CD4-positive, alpha-beta memory T cell (primary cell): ENCODE measurements at regions of chr12 and their contacts with region 1.

Region 1: GRCh38 chr12:56224102-56224701 is at the start of gene NABP2:
- DNase-seq: peak; percentile 88 to 93 (median 89)
- H3K4me3 ChIP-seq: peak within 1 kb of the TSS; percentile 28 to 79
- H3K4me3 Mint-ChIP-seq: peak within 1 kb of the TSS; percentile 83 to 99 (median 87)
- H3K27ac ChIP-seq: peak within 1 kb of the TSS; percentile 83
- H3K27ac Mint-ChIP-seq: peak within 1 kb of the TSS; percentile 90 to 100 (median 99)
- H3K4me1 ChIP-seq: peaks cover 42% of the 10 kb centered on the region
- H3K4me1 Mint-ChIP-seq: peaks cover 24 to 58% (median 43%) of the 10 kb centered on the region in 4 donors
- H3K27me3 ChIP-seq: no peaks in the 10 kb centered on the region
- H3K27me3 Mint-ChIP-seq: no peaks in the 10 kb centered on the region
- total RNA-seq, gene NABP2: 16.9 to 19.1 TPM

Region 2: GRCh38 chr12:55092579-55092978 is 1131.6 kb before region 1 on chr12:
- CTCF ChIA-PET with region 1: no interaction called
- POLR2A ChIA-PET with region 1: no interaction called
- intact Hi-C with region 1: no loop called
- DNase-seq: no peak
- H3K4me3 ChIP-seq: no peak overlapping the region
- H3K4me3 Mint-ChIP-seq: no peak overlapping the region
- H3K27ac ChIP-seq: no peak overlapping the region
- H3K27ac Mint-ChIP-seq: no peak overlapping the region
- H3K4me1 ChIP-seq: no peaks in the 10 kb centered on the region
- H3K4me1 Mint-ChIP-seq: no peaks in the 10 kb centered on the region
- H3K27me3 ChIP-seq: no peaks in the 10 kb centered on the region
- H3K27me3 Mint-ChIP-seq: peaks cover 12 to 23% of the 10 kb centered on the region in 2 donors

Region 3: DNA sequence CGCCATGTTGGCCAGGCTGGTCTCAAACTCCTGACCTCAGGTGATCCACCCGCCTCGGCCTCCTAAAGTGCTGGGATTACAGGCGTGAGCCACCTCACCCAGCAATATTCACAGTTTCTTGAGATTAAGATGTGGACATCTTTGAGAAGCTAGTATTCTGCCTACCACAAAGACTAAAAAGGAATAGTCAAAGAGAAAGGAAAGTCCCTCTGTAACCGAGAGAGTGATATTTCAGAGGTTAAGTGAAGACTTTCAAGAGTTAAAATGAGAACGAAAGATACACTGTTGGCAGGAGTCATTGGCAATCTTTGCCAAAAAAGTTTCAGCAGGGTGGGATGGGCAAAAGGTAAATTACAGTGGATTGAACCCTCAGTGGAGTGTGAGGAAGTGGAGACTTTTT is 277.6 kb before region 1 on chr12:
- CTCF ChIA-PET with region 1: no interaction called
- POLR2A ChIA-PET with region 1: no interaction called
- intact Hi-C with region 1: no loop called
- DNase-seq: no peak
- H3K4me3 ChIP-seq: no peak overlapping the region
- H3K4me3 Mint-ChIP-seq: no peak overlapping the region
- H3K27ac ChIP-seq: no peak overlapping the region
- H3K27ac Mint-ChIP-seq: peak overlapping the region in 6 of 7 donors; percentile 43 to 74 (median 58)
- H3K4me1 ChIP-seq: peaks cover 9% of the 10 kb centered on the region
- H3K4me1 Mint-ChIP-seq: peaks cover 17 to 44% (median 26%) of the 10 kb centered on the region in 4 donors
- H3K27me3 ChIP-seq: no peaks in the 10 kb centered on the region
- H3K27me3 Mint-ChIP-seq: no peaks in the 10 kb centered on the region

Region 4: GRCh38 chr12:56104109-56104814 is 119.9 kb before region 1 on chr12 and contains the start of gene PA2G4:
- CTCF ChIA-PET with region 1: interaction called, 11 read pairs
- POLR2A ChIA-PET with region 1: interaction called, 23 read pairs
- intact Hi-C with region 1: no loop called
- DNase-seq: peak; percentile 95 to 97 (median 96)
- H3K4me3 ChIP-seq: peak within 1 kb of the TSS; percentile 62 to 90
- H3K4me3 Mint-ChIP-seq: peak within 1 kb of the TSS; percentile 89 to 99 (median 96)
- H3K27ac ChIP-seq: peak within 1 kb of the TSS; percentile 82
- H3K27ac Mint-ChIP-seq: peak within 1 kb of the TSS; percentile 97 to 100 (median 98)
- H3K4me1 ChIP-seq: peaks cover 49% of the 10 kb centered on the region
- H3K4me1 Mint-ChIP-seq: peaks cover 34 to 62% (median 47%) of the 10 kb centered on the region in 4 donors
- H3K27me3 ChIP-seq: no peaks in the 10 kb centered on the region
- H3K27me3 Mint-ChIP-seq: no peaks in the 10 kb centered on the region
- total RNA-seq, gene PA2G4: 106 to 108 TPM

Region 5: GRCh38 chr12:56158029-56158925 is 65.9 kb before region 1 on chr12 and contains the start of gene MYL6:
- CTCF ChIA-PET with region 1: interaction called, 3 read pairs
- POLR2A ChIA-PET with region 1: interaction called, 9 read pairs
- intact Hi-C with region 1: loop called (anchors 1 kb)
- DNase-seq: peak; percentile 88 to 98 (median 91)
- H3K4me3 ChIP-seq: peak within 1 kb of the TSS; percentile 86 to 89
- H3K4me3 Mint-ChIP-seq: peak within 1 kb of the TSS; percentile 93 to 100 (median 97)
- H3K27ac ChIP-seq: peak within 1 kb of the TSS; percentile 97
- H3K27ac Mint-ChIP-seq: peak within 1 kb of the TSS; percentile 96 to 100 (median 99)
- H3K4me1 ChIP-seq: peaks cover 40% of the 10 kb centered on the region
- H3K4me1 Mint-ChIP-seq: peaks cover 28 to 64% (median 37%) of the 10 kb centered on the region in 4 donors
- H3K27me3 ChIP-seq: no peaks in the 10 kb centered on the region
- H3K27me3 Mint-ChIP-seq: no peaks in the 10 kb centered on the region
- total RNA-seq, gene MYL6: 567 to 589 TPM

Region 6: GRCh38 chr12:56266693-56267442 is 42.7 kb after region 1 on chr12 and contains the start of gene COQ10A:
- CTCF ChIA-PET with region 1: interaction called, 13 read pairs
- POLR2A ChIA-PET with region 1: interaction called, 17 read pairs
- intact Hi-C with region 1: loop called (anchors 5 kb)
- DNase-seq: peak; percentile 89 to 96 (median 91)
- H3K4me3 ChIP-seq: peak within 1 kb of the TSS; percentile 27 to 90
- H3K4me3 Mint-ChIP-seq: peak within 1 kb of the TSS; percentile 89 to 99 (median 96)
- H3K27ac ChIP-seq: peak within 1 kb of the TSS; percentile 84
- H3K27ac Mint-ChIP-seq: peak within 1 kb of the TSS; percentile 90 to 99 (median 97)
- H3K4me1 ChIP-seq: peaks cover 14% of the 10 kb centered on the region
- H3K4me1 Mint-ChIP-seq: peaks cover 10 to 23% (median 16%) of the 10 kb centered on the region in 4 donors
- H3K27me3 ChIP-seq: no peaks in the 10 kb centered on the region
- H3K27me3 Mint-ChIP-seq: no peaks in the 10 kb centered on the region
- total RNA-seq, gene COQ10A: 35.3 to 38.6 TPM

Region 7: GRCh38 chr12:56448860-56449621 is 224.8 kb after region 1 on chr12 and contains the start of gene TIMELESS:
- CTCF ChIA-PET with region 1: no interaction called
- POLR2A ChIA-PET with region 1: interaction called, 18 read pairs
- intact Hi-C with region 1: no loop called
- DNase-seq: peak; percentile 85 to 90 (median 86)
- H3K4me3 ChIP-seq: peak within 1 kb of the TSS; percentile 96
- H3K4me3 Mint-ChIP-seq: peak within 1 kb of the TSS; percentile 90 to 95 (median 94)
- H3K27ac ChIP-seq: peak within 1 kb of the TSS; percentile 75
- H3K27ac Mint-ChIP-seq: peak within 1 kb of the TSS; percentile 75 to 98 (median 97)
- H3K4me1 ChIP-seq: peaks cover 7% of the 10 kb centered on the region
- H3K4me1 Mint-ChIP-seq: peaks cover 11 to 28% (median 16%) of the 10 kb centered on the region in 4 donors
- H3K27me3 ChIP-seq: no peaks in the 10 kb centered on the region
- H3K27me3 Mint-ChIP-seq: no peaks in the 10 kb centered on the region
- total RNA-seq, gene TIMELESS: 7.3 to 7.5 TPM

Region 8: DNA sequence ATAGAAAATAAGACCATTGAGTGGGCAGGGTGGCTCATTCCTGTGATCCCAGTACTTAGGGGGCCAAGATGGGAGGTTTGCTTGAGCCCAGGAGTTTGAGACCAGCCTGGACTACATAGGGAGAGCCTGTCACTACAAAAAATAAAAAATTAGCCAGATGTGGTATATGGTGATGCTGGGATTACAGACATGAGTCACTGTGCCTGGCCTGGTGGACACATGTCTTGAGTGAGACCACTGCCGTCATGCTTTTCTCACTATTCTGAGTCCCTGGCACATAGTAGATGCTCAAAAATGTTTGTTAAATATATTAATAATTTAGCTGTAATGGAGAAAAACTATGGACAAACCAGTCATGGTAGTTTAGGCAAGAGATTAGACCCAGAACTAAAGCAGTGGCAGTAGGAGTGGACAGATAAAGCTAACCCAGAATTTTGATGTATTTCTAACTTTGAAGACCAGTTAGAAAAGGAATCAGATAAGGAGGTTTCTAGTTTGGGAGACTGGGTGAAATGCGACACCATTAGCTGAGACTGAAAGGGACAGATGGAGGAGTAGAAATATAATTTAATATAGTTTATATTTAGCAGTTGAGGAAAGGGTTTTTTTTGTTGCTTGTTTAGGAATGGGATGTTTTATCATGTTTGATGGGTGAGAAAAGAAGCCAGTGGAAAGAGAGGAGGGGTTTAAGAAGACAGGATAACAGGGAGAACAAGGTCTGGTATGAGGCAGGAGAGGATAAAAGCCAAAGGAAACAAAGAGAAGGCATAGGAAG is 471.3 kb after region 1 on chr12:
- CTCF ChIA-PET with region 1: no interaction called
- POLR2A ChIA-PET with region 1: no interaction called
- intact Hi-C with region 1: no loop called
- DNase-seq: no peak
- H3K4me3 ChIP-seq: no peak overlapping the region
- H3K4me3 Mint-ChIP-seq: no peak overlapping the region
- H3K27ac ChIP-seq: no peak overlapping the region
- H3K27ac Mint-ChIP-seq: peak overlapping the region in 3 of 7 donors; percentile 13 to 38 (median 30)
- H3K4me1 ChIP-seq: no peaks in the 10 kb centered on the region
- H3K4me1 Mint-ChIP-seq: peaks cover 0 to 1% (median 0%) of the 10 kb centered on the region in 4 donors
- H3K27me3 ChIP-seq: no peaks in the 10 kb centered on the region
- H3K27me3 Mint-ChIP-seq: no peaks in the 10 kb centered on the region

Region 9: DNA sequence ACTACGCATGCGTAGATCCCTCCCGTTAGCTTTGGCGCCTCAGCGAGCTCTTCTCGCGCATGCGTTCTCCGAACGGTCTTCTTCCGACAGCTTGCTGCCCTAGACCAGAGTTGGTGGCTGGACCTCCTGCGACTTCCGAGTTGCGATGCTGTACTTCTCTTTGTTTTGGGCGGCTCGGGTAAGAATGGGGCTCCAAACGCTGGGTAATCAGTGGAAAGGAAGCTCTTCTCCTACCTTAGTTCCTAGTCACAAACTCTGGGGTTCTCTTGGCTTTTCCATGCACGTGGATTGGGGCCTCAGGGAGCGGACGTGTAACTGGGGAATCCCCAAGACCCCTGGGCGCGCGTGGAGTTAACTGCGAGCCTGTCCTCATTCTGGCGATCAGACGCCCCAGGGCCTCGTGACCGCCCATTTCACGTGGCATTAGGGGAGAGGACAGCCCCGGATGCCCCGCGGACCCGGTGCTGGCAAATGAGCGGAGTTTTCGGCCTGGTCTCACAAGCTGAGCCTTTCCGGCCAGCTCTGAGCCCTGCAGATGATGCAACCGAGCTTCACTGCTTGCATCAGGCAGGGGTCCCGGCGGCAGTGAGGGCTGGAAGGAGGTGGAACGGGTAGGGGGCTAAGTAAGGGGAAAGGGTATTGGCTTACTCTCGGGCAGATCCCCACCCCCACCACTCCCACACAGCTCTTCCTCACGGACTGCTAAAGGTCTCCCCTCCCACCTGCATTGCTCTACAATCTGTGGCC is 1005.6 kb after region 1 on chr12 and contains the start of gene SHMT2:
- CTCF ChIA-PET with region 1: no interaction called
- POLR2A ChIA-PET with region 1: no interaction called
- intact Hi-C with region 1: loop called (anchors 5 kb)
- DNase-seq: peak; percentile 89 to 90 (median 90)
- H3K4me3 ChIP-seq: peak within 1 kb of the TSS; percentile 80 to 90
- H3K4me3 Mint-ChIP-seq: peak within 1 kb of the TSS; percentile 92 to 99 (median 94)
- H3K27ac ChIP-seq: peak within 1 kb of the TSS; percentile 57
- H3K27ac Mint-ChIP-seq: peak within 1 kb of the TSS; percentile 80 to 95 (median 89)
- H3K4me1 ChIP-seq: peaks cover 66% of the 10 kb centered on the region
- H3K4me1 Mint-ChIP-seq: peaks cover 27 to 67% (median 46%) of the 10 kb centered on the region in 4 donors
- H3K27me3 ChIP-seq: peaks cover 16% of the 10 kb centered on the region
- H3K27me3 Mint-ChIP-seq: peaks cover 14 to 17% of the 10 kb centered on the region in 2 donors
- total RNA-seq, gene SHMT2: 39.8 to 46.1 TPM